ENCODE measurements at regions of chr20 and their contacts with region 1.

Region 1: GRCh38 chr20:17682103-17682888 is at the start of gene RRBP1:
- DNase-seq: peak; percentile 98
- ATAC-seq: peak; percentile 76 to 83
- H3K4me3 ChIP-seq: peak within 1 kb of the TSS; percentile 68 to 80 (median 76)
- H3K27ac ChIP-seq: peak within 1 kb of the TSS; percentile 82 to 86 (median 84)
- H3K4me1 ChIP-seq: peaks cover 7 to 13% of the 10 kb centered on the region in 2 donors
- H3K27me3 ChIP-seq: no peaks in the 10 kb centered on the region
- CTCF ChIP-seq: peak; percentile 60 to 76 (median 66)
- POLR2A ChIP-seq: peak; percentile 80 to 93
- total RNA-seq, gene RRBP1: 14.1 to 22.7 (median 17.9) TPM

Region 2: GRCh38 chr20:17569616-17570346 is 112.5 kb before region 1 on chr20 and contains the start of gene DSTN:
- in situ Hi-C with region 1: no loop called
- intact Hi-C with region 1: loop called (anchors 1 kb)
- DNase-seq: peak; percentile 85 to 86
- ATAC-seq: peak; percentile 88 to 89
- H3K4me3 ChIP-seq: peak within 1 kb of the TSS; percentile 96 to 99 (median 98)
- H3K27ac ChIP-seq: peak within 1 kb of the TSS; percentile 99 to 100 (median 99)
- H3K4me1 ChIP-seq: peaks cover 22 to 38% of the 10 kb centered on the region in 2 donors
- H3K27me3 ChIP-seq: no peaks in the 10 kb centered on the region
- CTCF ChIP-seq: peak in 1 of 5 experiments; percentile 10
- POLR2A ChIP-seq: peak; percentile 97 to 98
- total RNA-seq, gene DSTN: 79.2 to 128 (median 88.5) TPM

Region 3: GRCh38 chr20:17898548-17898994 is 216.3 kb after region 1 on chr20:
- in situ Hi-C with region 1: loop called in 3 of 4 experiments (anchors 5 to 25 kb)
- intact Hi-C with region 1: loop called (anchors 1 kb)
- DNase-seq: peak; percentile 40 to 59
- ATAC-seq: peak; percentile 51 to 81
- H3K4me3 ChIP-seq: no peak overlapping the region
- H3K27ac ChIP-seq: no peak overlapping the region
- H3K4me1 ChIP-seq: peaks cover 19 to 23% of the 10 kb centered on the region in 2 donors
- H3K27me3 ChIP-seq: no peaks in the 10 kb centered on the region
- CTCF ChIP-seq: peak; percentile 84 to 94 (median 85)
- POLR2A ChIP-seq: no peak

Region 4: GRCh38 chr20:17968366-17969279 is 286.3 kb after region 1 on chr20 and contains the starts of genes MGME1 and SNX5:
- in situ Hi-C with region 1: no loop called
- intact Hi-C with region 1: loop called (anchors 2 kb)
- DNase-seq: peak; percentile 99
- ATAC-seq: peak; percentile 82 to 85
- H3K4me3 ChIP-seq: peak within 1 kb of the TSS; percentile 91 to 97 (median 94)
- H3K27ac ChIP-seq: peak within 1 kb of the TSS; percentile 93 to 99 (median 96)
- H3K4me1 ChIP-seq: peaks cover 75 to 76% of the 10 kb centered on the region in 2 donors
- H3K27me3 ChIP-seq: no peaks in the 10 kb centered on the region
- CTCF ChIP-seq: no peak
- POLR2A ChIP-seq: peak; percentile 55 to 68
- total RNA-seq, gene MGME1: 5.2 to 9.1 (median 7.2) TPM
- total RNA-seq, gene SNX5: 49.8 to 88.8 (median 60.9) TPM

Region 5: GRCh38 chr20:18137412-18138265 is 455.3 kb after region 1 on chr20 and contains the starts of genes KAT14 and PET117:
- in situ Hi-C with region 1: no loop called
- intact Hi-C with region 1: loop called (anchors 10 kb)
- DNase-seq: peak; percentile 68 to 79
- ATAC-seq: peak; percentile 95 to 97
- H3K4me3 ChIP-seq: peak within 1 kb of the TSS; percentile 72 to 89 (median 84)
- H3K27ac ChIP-seq: peak within 1 kb of the TSS; percentile 83 to 96 (median 94)
- H3K4me1 ChIP-seq: peaks cover 22 to 26% of the 10 kb centered on the region in 2 donors
- H3K27me3 ChIP-seq: no peaks in the 10 kb centered on the region
- CTCF ChIP-seq: peak in 2 of 5 experiments; percentile 46 to 58
- POLR2A ChIP-seq: peak; percentile 52 to 64
- total RNA-seq, gene KAT14: 12.6 to 29.7 (median 19.8) TPM
- total RNA-seq, gene PET117: 14.4 to 28.2 (median 16.7) TPM